WTC11 (cell line): ENCODE measurements at regions of chr11 and their contacts with region 1.

Region 1: GRCh38 chr11:68297812-68298658 is 14.4 kb upstream of the LRP5 start:
- DNase-seq: peak; percentile 87
- ATAC-seq: peak; percentile 98
- H3K4me3 Mint-ChIP-seq: no peak overlapping the region
- H3K27ac Mint-ChIP-seq: no peak overlapping the region
- H3K4me1 Mint-ChIP-seq: no peaks in the 10 kb centered on the region
- H3K27me3 Mint-ChIP-seq: peaks cover 2% of the 10 kb centered on the region; the same call in 1 of the 2 replicates
- CTCF ChIP-seq: peak; percentile 98

Region 2: GRCh38 chr11:68165601-68166000 is 132.4 kb before region 1 on chr11:
- CTCF ChIA-PET with region 1: no interaction called
- POLR2A ChIA-PET with region 1: no interaction called
- DNase-seq: no peak
- ATAC-seq: no peak
- H3K4me3 Mint-ChIP-seq: no peak overlapping the region
- H3K27ac Mint-ChIP-seq: no peak overlapping the region
- H3K4me1 Mint-ChIP-seq: no peaks in the 10 kb centered on the region
- H3K27me3 Mint-ChIP-seq: no peaks in the 10 kb centered on the region
- CTCF ChIP-seq: no peak

Region 3: DNA sequence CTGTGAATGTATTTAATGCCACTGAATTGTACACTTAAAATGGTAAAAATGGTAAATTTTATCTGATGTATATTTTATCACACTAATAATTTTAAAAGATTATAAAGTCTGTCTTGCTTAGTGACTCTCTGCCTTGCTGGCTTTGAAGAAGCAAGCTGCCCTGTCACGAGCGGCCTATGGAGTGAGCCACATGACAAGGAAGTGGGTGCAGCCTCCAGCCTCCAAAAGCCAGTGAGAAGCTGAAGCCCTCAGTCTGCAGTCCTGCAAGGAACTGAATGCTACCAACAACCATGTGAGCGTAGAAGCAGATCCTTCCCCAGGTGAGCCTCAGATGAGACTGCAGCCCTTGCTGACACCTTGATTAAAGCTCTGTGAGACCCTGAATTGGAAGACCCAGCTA is 46.3 kb before region 1 on chr11:
- CTCF ChIA-PET with region 1: interaction called, 111 read pairs
- POLR2A ChIA-PET with region 1: no interaction called
- DNase-seq: no peak
- ATAC-seq: no peak
- H3K4me3 Mint-ChIP-seq: no peak overlapping the region
- H3K27ac Mint-ChIP-seq: no peak overlapping the region
- H3K4me1 Mint-ChIP-seq: peaks cover 8% of the 10 kb centered on the region
- H3K27me3 Mint-ChIP-seq: peaks cover 1% of the 10 kb centered on the region; the same call in 1 of the 2 replicates
- CTCF ChIP-seq: no peak

Region 4: DNA sequence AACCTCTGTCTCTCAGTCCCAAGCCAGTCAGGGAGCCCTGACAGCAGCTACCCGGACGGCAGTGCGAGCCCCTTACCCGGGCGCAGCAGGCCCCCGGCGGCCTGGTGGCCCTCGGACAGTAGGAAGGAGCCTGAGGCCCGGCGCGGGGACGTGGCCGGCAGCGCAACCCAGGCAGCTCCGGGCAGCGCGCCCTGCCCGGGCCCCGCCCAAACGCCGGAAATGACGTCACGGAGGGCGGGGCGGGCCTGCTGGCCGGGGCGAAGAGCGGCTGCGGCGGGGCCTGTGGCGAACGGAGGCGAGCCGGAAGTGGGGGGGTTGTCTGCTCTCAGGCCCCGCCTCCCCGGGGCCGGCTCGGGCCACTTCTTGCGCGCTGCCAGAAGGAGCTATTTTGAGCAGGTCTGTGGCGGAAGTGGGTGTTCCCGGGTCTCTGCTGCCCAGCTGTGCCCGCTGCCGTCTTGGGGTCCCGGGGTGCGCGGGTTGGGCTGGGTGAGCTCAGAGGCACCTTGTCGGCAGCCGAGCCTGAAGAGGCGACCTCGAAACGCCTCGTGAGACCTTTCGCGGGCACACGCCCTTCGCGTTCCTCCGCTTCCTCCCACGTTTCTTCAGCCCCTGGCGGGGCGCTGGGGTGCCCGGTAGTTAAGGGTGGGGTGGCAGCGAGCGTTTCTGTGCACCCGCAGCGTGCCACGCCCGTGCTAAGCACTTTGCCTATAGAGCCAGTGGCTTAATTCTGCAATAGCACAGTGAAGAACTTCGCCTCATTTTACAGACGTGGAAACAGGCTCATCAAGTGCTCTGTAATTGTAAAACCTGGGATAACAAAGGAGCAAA is 26.0 kb before region 1 on chr11 and contains the start of gene C11orf24:
- CTCF ChIA-PET with region 1: interaction called, 26 read pairs
- POLR2A ChIA-PET with region 1: interaction called, 5 read pairs
- DNase-seq: peak; percentile 93
- ATAC-seq: peak; percentile 92
- H3K4me3 Mint-ChIP-seq: peak within 1 kb of the TSS; percentile 98
- H3K27ac Mint-ChIP-seq: peak within 1 kb of the TSS; percentile 99
- H3K4me1 Mint-ChIP-seq: peaks cover 21% of the 10 kb centered on the region
- H3K27me3 Mint-ChIP-seq: no peaks in the 10 kb centered on the region
- CTCF ChIP-seq: no peak
- total RNA-seq, gene C11orf24: 41.8 to 53.7 TPM (median 43.8 TPM) in 3 replicates

Region 5: DNA sequence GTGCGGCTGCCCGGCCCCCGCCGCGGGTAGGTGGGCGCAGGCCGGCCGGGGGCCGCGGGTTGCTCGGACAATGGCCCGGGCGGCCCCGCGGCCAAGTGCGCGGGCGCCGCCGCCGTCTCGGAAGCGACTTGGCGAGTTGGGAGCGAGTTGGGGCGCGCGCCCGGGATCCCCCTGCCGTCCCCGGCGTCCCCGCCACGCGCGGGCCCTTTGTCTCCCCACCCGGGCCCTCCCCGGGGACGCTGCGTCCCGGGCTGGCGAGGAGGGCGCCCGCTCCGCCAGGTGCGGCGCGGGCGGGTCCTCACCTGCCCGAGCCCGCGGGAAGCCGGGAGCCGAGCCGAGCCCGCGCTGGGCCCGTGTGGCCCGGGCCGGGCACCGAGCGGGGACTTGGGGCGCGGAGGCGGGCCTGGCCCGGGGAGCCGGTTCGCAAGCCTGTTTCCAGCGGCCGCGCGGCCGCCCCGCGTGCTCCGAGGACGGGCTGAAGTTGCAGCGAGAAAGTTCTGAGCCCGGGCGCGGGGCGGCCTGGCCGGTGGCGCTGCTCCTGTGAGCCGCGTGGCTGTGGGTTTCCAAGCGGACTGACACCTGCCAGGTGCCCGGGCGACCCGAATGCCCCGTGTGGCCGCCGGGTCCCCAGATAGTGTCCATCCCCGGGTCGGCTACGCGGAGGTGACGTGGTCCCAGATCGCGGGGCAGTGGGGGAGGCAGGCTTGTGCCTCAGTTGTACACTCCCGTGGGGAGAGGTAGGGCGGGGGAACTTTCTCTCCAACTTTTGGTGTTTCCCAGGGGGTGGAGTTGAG is 14.9 kb after region 1 on chr11:
- CTCF ChIA-PET with region 1: interaction called, 13 read pairs
- POLR2A ChIA-PET with region 1: interaction called, 4 read pairs
- DNase-seq: no peak
- ATAC-seq: peak; percentile 7
- H3K4me3 Mint-ChIP-seq: peak overlapping the region; percentile 88
- H3K27ac Mint-ChIP-seq: peak overlapping the region; percentile 97
- H3K4me1 Mint-ChIP-seq: peaks cover 52% of the 10 kb centered on the region
- H3K27me3 Mint-ChIP-seq: peaks cover 5% of the 10 kb centered on the region; the same call in 1 of the 2 replicates
- CTCF ChIP-seq: no peak

Region 6: DNA sequence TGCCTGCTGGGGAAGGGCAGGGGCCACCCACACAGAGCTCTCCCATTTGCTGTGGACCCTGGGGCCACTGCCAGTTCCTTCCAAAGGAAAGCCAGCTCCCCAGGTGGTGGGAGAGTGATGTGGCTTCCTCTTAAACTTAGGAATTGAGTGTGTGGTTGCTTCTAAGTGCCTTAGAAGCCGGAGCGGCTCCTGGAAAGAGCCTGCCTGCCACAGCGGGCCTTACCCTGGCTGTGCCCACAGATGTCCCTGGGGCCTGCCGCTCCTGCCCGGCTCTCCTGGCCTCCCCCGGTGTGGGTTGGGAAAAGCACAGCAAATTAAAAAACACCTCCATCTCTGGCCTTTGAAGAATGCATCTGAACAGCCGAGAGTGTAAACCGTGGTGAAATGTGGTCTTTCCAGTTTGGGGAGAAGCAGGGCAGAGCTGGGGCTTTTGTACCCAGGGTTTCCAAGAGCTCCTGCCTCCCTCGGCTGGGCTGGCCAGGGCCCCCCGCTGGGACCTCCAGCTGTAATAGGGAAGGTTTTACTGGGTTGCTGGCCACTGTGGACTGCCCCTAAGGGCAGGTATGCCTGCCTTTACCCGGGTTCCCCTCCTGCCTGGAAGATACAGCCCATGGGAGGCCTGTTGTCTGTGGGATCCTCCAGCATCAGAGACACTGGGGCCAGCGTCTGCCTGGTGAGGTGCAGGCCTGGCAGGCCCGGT is 44.6 kb after region 1 on chr11:
- CTCF ChIA-PET with region 1: interaction called, 15 read pairs
- POLR2A ChIA-PET with region 1: no interaction called
- DNase-seq: peak; percentile 74
- ATAC-seq: peak; percentile 76
- H3K4me3 Mint-ChIP-seq: no peak overlapping the region
- H3K27ac Mint-ChIP-seq: peak overlapping the region; percentile 89
- H3K4me1 Mint-ChIP-seq: peaks cover 58% of the 10 kb centered on the region
- H3K27me3 Mint-ChIP-seq: no peaks in the 10 kb centered on the region
- CTCF ChIP-seq: no peak

Region 7: DNA sequence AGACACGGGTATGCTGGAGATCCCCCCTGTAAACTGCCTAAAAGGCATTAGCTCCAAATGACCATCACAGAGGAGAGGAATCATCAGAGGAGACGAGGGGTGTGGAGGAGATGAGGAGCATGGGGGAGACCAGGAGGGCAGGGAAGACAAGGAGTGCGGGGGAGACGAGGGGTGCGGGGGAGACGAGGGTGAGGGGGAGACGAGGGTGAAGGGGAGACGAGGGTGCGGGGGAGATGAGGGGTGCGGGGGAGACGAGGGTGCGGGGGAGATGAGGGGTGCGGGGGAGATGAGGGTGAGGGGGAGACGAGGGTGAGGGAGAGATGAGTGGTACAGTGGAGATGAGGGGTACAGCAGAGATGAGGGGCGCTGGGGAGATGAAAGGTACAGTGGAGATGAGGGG is 368.8 kb after region 1 on chr11:
- CTCF ChIA-PET with region 1: no interaction called
- POLR2A ChIA-PET with region 1: no interaction called
- DNase-seq: no peak
- ATAC-seq: no peak
- H3K4me3 Mint-ChIP-seq: no peak overlapping the region
- H3K27ac Mint-ChIP-seq: no peak overlapping the region
- H3K4me1 Mint-ChIP-seq: peaks cover 7% of the 10 kb centered on the region
- H3K27me3 Mint-ChIP-seq: no peaks in the 10 kb centered on the region
- CTCF ChIP-seq: no peak